Left lung (tissue), 14 donors: ENCODE measurements at regions of chrX and their contacts with region 1.

Region 1: DNA sequence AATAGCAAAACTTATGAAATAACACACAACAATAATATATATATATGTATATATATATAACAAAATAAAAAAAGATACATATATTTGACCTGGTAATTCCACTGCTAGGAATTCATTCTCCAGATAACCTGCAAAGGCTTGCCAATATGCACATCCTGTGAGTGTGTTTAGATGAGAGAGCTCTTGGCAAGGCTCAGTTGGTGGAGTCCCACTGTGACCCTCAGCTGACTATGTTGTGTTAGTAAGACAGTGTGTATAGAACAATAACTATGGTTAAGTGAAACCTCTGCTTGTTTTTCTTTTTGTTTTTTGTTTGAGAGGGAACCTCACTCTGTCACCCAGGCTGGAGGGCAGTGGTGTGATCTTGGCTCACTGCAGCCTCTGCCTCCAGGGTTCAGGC is 39.5 kb upstream of the RBMX start:
- DNase-seq: no peak
- ATAC-seq: no peak
- H3K4me3 ChIP-seq: no peak overlapping the region
- H3K27ac ChIP-seq: peak overlapping the region in 1 of 2 donors; percentile 18
- H3K4me1 ChIP-seq: no peaks in the 10 kb centered on the region
- H3K27me3 ChIP-seq: no peaks in the 10 kb centered on the region
- CTCF ChIP-seq: no peak

Region 2: GRCh38 chrX:136711147-136711546 is 208.9 kb before region 1 on chrX:
- intact Hi-C with region 1: loop called in 1 of 2 experiments (anchors 10 kb)
- DNase-seq: peak in 2 of 4 donors; percentile 17 to 37
- ATAC-seq: peak; percentile 68
- H3K4me3 ChIP-seq: no peak overlapping the region
- H3K27ac ChIP-seq: no peak overlapping the region
- H3K4me1 ChIP-seq: peaks cover 0 to 10% of the 10 kb centered on the region in 2 donors
- H3K27me3 ChIP-seq: no peaks in the 10 kb centered on the region
- CTCF ChIP-seq: peak; percentile 13 to 19

Region 3: GRCh38 chrX:136768469-136769084 is 151.4 kb before region 1 on chrX:
- intact Hi-C with region 1: no loop called
- DNase-seq: peak in 1 of 4 donors; percentile 61
- ATAC-seq: peak; percentile 57
- H3K4me3 ChIP-seq: no peak overlapping the region
- H3K27ac ChIP-seq: peak overlapping the region; percentile 82 to 92
- H3K4me1 ChIP-seq: peaks cover 0 to 21% of the 10 kb centered on the region in 2 donors
- H3K27me3 ChIP-seq: no peaks in the 10 kb centered on the region
- CTCF ChIP-seq: no peak